ENCODE measurements at regions of chr16 and their contacts with region 1.

Region 1: DNA sequence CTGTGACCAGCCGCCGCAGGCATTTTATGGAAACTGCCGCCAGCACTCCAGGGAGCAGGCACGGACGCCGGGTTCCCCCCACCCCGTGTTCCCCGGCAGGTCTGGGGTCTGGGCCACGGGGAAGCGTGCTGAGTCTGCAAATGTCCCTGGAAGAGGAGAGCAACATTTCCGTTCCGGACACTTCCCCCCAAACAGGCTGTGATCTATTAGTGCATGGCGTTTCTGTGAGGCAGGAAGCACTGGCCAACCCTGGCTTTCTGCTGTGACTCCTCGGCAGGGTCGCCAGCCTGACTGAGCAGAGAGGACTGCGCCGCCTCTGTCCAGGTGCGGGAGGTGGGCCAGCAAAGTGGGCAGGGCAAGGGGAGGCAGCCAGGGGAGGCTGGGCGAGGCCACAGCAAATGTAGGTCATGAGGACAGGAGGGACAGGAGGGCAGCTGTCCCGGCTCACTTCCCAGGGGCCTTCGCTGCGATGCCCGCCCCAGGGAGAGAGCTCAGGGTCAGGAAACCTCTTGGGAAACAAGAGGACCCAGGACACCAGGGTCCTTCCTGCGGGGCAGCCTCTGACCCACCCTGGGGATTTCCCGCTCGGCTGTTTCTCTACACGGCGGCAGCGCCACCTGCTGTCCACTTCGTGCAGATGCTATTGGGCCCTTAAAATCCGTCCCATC is 9.5 kb downstream of the FOXF1 start:
- DNase-seq: peak; percentile 60
- H3K4me3 ChIP-seq: no peak overlapping the region
- H3K27ac ChIP-seq: no peak overlapping the region
- H3K4me1 ChIP-seq: no peaks in the 10 kb centered on the region
- H3K27me3 ChIP-seq: peaks cover 97% of the 10 kb centered on the region
- CTCF ChIP-seq: peak; percentile 89

Region 2: GRCh38 chr16:85821441-85822135 is 698.2 kb before region 1 on chr16:
- CTCF ChIA-PET with region 1: no interaction called
- POLR2A ChIA-PET with region 1: no interaction called
- intact Hi-C with region 1: loop called (anchors 5 kb)
- DNase-seq: peak; percentile 74
- H3K4me3 ChIP-seq: no peak overlapping the region
- H3K27ac ChIP-seq: no peak overlapping the region
- H3K4me1 ChIP-seq: no peaks in the 10 kb centered on the region
- H3K27me3 ChIP-seq: peaks cover 26% of the 10 kb centered on the region
- CTCF ChIP-seq: peak; percentile 96

Region 3: GRCh38 chr16:86044241-86044671 is 475.5 kb before region 1 on chr16:
- CTCF ChIA-PET with region 1: interaction called, 4 read pairs
- POLR2A ChIA-PET with region 1: no interaction called
- intact Hi-C with region 1: loop called (anchors 2 kb)
- DNase-seq: peak; percentile 64
- H3K4me3 ChIP-seq: no peak overlapping the region
- H3K27ac ChIP-seq: no peak overlapping the region
- H3K4me1 ChIP-seq: no peaks in the 10 kb centered on the region
- H3K27me3 ChIP-seq: peaks cover 58% of the 10 kb centered on the region
- CTCF ChIP-seq: peak; percentile 83

Region 4: DNA sequence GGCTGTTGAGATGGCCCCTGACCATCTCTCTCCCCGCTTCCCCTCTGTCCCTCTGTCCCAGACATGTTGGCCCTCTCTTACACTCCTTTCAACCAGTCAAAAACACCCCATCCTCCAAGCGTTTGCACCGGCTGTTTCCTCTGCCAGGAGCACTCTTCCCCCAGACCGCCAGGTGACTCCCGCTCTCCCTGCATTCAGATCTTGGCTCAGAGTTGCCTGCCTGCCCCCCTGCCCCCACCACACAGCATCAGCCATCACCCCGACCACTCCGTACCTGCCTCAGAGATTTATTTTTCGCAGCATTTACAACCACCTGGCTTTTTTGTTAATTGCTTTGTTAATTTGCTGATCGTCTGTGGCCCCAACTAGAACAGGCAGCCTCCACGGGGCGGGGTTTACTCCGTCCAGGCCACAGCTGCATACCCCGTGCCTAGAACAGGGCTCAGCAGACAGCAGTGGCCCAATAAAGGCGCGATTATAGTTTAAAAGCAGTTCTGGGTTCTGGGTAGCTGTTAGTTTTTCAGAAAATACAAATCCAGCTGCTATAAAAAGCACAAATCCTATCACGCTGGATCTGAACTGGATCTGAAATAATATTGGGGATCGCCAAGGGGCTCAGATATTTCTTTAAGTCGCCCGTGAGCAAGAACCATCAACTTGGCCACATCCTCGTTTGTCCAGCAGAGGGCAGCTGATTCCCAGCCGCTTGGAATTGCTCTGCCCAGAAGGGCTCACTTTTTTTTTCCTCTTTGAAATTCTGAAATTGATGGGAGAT is 447.3 kb before region 1 on chr16:
- CTCF ChIA-PET with region 1: interaction called, 14 read pairs
- POLR2A ChIA-PET with region 1: no interaction called
- intact Hi-C with region 1: loop called (anchors 1 kb)
- DNase-seq: peak; percentile 65
- H3K4me3 ChIP-seq: no peak overlapping the region
- H3K27ac ChIP-seq: no peak overlapping the region
- H3K4me1 ChIP-seq: no peaks in the 10 kb centered on the region
- H3K27me3 ChIP-seq: peaks cover 6% of the 10 kb centered on the region
- CTCF ChIP-seq: peak; percentile 81

Region 5: GRCh38 chr16:86343027-86343787 is 176.6 kb before region 1 on chr16:
- CTCF ChIA-PET with region 1: interaction called, 3 read pairs
- POLR2A ChIA-PET with region 1: no interaction called
- intact Hi-C with region 1: loop called (anchors 2 kb)
- DNase-seq: no peak
- H3K4me3 ChIP-seq: no peak overlapping the region
- H3K27ac ChIP-seq: no peak overlapping the region
- H3K4me1 ChIP-seq: no peaks in the 10 kb centered on the region
- H3K27me3 ChIP-seq: peaks cover 60% of the 10 kb centered on the region
- CTCF ChIP-seq: no peak

Region 6: DNA sequence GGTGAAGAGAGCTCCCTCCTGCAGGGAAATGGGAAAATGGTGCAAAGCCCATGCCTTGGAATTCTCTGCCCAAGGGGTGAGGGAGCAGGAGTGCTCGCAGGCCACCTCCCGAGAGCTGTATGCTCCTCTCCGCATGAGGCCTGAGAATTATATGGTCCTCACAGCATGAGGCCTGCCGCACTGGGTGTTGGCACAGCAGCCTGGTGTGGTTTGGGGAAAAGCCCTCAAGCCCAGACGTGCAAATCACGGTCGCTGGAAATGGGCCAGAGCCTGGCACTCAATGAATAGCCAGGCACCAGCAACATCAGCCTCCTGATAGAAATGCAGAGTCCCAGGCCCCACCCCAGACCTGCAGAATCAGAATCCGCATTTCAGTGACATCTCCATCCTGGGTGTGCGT is 165.8 kb before region 1 on chr16:
- CTCF ChIA-PET with region 1: no interaction called
- POLR2A ChIA-PET with region 1: no interaction called
- intact Hi-C with region 1: no loop called
- DNase-seq: no peak
- H3K4me3 ChIP-seq: no peak overlapping the region
- H3K27ac ChIP-seq: no peak overlapping the region
- H3K4me1 ChIP-seq: no peaks in the 10 kb centered on the region
- H3K27me3 ChIP-seq: peaks cover 78% of the 10 kb centered on the region
- CTCF ChIP-seq: no peak

Region 7: DNA sequence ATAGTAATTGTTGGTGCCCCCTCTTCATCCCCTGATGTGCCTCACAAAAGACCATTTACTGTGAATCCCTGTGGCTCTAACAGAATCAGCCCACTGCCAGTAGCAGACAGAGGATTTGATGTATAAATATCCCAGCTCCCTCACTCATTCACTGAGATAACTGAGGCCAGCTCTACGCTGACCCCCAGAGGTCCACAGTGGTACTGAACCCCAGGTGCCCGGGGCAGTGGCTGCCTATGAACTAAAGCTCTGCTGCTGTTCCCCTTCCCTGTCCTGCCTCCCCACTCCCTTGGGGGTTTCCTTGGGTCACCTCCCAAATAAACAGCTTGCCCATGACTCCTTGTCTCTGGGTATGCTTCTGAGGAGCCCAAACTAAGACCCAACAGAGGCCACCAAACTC is 354.4 kb after region 1 on chr16:
- CTCF ChIA-PET with region 1: no interaction called
- POLR2A ChIA-PET with region 1: no interaction called
- intact Hi-C with region 1: no loop called
- DNase-seq: peak; percentile 41
- H3K4me3 ChIP-seq: no peak overlapping the region
- H3K27ac ChIP-seq: no peak overlapping the region
- H3K4me1 ChIP-seq: no peaks in the 10 kb centered on the region
- H3K27me3 ChIP-seq: no peaks in the 10 kb centered on the region
- CTCF ChIP-seq: peak; percentile 72